ENCODE measurements at regions of chr2 and their contacts with region 1.

Region 1: DNA sequence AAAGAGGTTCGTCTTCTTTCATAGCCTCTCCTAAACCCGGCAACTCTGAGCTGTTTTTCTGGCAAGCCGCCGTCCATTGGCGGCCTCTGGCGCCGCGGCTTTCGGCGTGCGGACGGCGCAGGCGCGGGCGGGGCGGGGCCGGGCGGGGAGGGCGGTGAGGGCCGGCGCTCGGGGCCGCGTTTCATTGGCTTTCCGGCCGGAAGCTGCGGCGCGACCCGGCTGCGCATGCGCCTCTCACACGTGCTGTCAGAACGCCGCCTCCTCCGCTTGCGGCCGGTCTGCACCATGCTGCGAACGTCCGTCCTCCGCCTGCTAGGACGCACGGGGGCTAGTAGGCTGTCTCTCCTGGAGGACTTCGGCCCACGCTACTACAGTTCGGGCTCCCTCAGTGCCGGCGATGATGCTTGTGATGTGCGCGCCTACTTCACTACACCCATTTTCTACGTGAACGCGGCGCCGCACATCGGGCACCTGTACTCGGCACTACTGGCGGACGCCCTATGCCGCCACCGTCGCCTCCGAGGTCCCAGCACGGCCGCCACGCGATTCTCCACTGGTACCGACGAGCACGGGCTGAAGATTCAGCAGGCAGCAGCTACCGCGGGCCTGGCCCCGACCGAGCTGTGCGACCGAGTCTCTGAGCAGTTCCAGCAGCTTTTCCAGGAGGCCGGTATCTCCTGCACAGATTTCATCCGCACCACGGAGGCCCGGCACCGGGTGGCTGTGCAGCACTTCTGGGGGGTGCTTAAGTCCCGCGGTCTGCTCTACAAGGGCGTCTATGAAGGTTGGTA is at the start of gene MARS2:
- DNase-seq: peak; percentile 86 to 97 (median 93)
- ATAC-seq: peak; percentile 83
- H3K4me3 ChIP-seq: peak within 1 kb of the TSS; percentile 79 to 99
- H3K4me3 Mint-ChIP-seq: peak within 1 kb of the TSS; percentile 87
- H3K27ac ChIP-seq: peak within 1 kb of the TSS; percentile 82 to 88
- H3K27ac Mint-ChIP-seq: peak within 1 kb of the TSS; percentile 94
- H3K4me1 ChIP-seq: peaks cover 42% of the 10 kb centered on the region
- H3K4me1 Mint-ChIP-seq: peaks cover 40% of the 10 kb centered on the region
- H3K27me3 ChIP-seq: no peaks in the 10 kb centered on the region
- H3K27me3 Mint-ChIP-seq: peaks cover 4% of the 10 kb centered on the region
- CTCF ChIP-seq: no peak
- total RNA-seq, gene MARS2: 8.4 to 9.2 TPM

Region 2: DNA sequence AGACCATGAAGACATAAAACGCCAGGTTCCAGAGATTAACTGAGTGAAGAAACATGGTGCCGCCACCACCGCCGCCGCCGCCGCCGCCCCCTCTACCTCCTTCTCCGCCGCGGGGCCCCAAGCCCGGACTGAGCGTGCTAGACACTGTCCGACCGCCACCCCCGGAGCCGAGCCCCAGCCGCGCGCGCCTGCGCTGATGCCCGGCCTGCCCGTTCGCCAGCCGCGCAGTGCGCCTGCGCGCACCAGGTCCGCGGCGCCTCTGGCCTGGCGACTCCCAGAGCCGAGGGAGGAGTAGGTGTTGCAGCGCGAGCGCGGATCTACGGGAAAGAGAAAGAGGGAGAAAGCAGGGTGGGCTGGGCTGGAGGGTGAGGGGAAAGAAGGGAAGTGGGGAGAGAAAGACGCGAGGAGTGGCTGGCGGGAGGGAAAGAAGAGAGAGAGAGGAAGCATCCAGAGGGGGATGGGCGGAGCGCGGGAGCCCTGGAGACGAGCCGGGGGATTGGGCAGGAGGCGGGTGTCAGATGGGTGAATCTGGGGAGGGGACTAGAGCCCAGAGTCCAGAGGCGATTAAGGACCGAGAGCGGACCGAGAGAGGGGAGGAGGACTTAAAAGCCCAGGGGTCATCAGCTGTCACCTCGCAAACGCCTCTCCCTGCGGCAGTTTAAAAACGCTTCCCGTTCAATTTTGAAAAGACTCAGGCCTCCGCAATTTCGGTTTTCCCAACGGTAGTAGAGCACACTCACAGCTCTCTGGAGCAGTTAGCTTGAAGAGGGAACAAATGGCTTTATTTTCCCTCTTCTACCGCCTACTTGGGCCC is 778.5 kb before region 1 on chr2 and contains the start of gene PGAP1:
- CTCF ChIA-PET with region 1: no interaction called
- POLR2A ChIA-PET with region 1: no interaction called
- intact Hi-C with region 1: loop called (anchors 2 to 10 kb)
- DNase-seq: peak; percentile 65 to 91 (median 81)
- ATAC-seq: peak; percentile 74
- H3K4me3 ChIP-seq: peak within 1 kb of the TSS; percentile 88 to 96
- H3K4me3 Mint-ChIP-seq: peak within 1 kb of the TSS; percentile 97
- H3K27ac ChIP-seq: peak within 1 kb of the TSS; percentile 66 to 69
- H3K27ac Mint-ChIP-seq: peak within 1 kb of the TSS; percentile 90
- H3K4me1 ChIP-seq: peaks cover 23% of the 10 kb centered on the region
- H3K4me1 Mint-ChIP-seq: peaks cover 33% of the 10 kb centered on the region
- H3K27me3 ChIP-seq: no peaks in the 10 kb centered on the region
- H3K27me3 Mint-ChIP-seq: no peaks in the 10 kb centered on the region
- CTCF ChIP-seq: no peak
- total RNA-seq, gene PGAP1: 11.6 to 12.3 TPM

Region 3: DNA sequence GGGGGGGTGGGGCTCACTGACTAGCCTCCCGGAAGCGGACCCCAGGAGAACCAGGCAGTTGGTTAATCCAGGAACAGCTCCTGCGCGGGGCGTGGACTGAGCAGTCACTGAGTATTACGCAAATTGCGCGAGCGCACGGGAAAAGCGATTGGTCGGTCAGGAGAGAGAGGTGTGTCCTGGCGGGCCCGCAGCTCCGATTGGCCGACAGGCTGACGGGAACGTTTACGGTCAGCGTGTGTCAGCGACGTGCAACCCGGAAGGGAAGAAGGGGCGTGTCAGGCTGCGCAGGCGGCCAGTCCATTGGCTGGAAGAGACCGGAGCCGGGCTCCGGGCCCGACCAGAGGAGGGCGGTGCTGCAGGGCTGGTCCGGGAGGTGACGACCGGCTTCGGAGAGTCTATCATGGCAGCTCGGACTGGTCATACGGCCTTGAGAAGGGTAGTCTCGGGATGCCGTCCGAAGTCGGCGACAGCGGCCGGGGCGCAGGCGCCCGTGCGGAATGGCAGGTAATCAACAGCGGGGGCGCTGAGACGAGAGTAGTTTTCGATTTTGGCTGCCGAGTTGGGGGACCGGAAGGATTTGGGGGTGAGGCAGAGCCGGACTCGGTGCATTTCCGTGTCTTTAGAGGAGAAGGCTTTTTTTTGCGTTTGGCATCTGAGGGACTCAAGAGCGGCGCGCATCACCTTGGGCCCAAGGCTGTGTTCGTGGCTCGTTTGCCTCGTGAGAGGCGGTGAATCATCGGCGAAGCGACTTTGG is 252.0 kb before region 1 on chr2 and contains the start of gene COQ10B:
- CTCF ChIA-PET with region 1: no interaction called
- POLR2A ChIA-PET with region 1: no interaction called
- intact Hi-C with region 1: loop called (anchors 1 to 5 kb)
- DNase-seq: peak; percentile 95 to 100 (median 97)
- ATAC-seq: peak; percentile 87
- H3K4me3 ChIP-seq: peak within 1 kb of the TSS; percentile 62 to 74
- H3K4me3 Mint-ChIP-seq: peak within 1 kb of the TSS; percentile 99
- H3K27ac ChIP-seq: peak within 1 kb of the TSS; percentile 93 to 95
- H3K27ac Mint-ChIP-seq: peak within 1 kb of the TSS; percentile 100
- H3K4me1 ChIP-seq: peaks cover 28% of the 10 kb centered on the region
- H3K4me1 Mint-ChIP-seq: peaks cover 48% of the 10 kb centered on the region
- H3K27me3 ChIP-seq: no peaks in the 10 kb centered on the region
- H3K27me3 Mint-ChIP-seq: no peaks in the 10 kb centered on the region
- CTCF ChIP-seq: no peak
- total RNA-seq, gene COQ10B: 66.9 to 67.6 TPM

Region 4: DNA sequence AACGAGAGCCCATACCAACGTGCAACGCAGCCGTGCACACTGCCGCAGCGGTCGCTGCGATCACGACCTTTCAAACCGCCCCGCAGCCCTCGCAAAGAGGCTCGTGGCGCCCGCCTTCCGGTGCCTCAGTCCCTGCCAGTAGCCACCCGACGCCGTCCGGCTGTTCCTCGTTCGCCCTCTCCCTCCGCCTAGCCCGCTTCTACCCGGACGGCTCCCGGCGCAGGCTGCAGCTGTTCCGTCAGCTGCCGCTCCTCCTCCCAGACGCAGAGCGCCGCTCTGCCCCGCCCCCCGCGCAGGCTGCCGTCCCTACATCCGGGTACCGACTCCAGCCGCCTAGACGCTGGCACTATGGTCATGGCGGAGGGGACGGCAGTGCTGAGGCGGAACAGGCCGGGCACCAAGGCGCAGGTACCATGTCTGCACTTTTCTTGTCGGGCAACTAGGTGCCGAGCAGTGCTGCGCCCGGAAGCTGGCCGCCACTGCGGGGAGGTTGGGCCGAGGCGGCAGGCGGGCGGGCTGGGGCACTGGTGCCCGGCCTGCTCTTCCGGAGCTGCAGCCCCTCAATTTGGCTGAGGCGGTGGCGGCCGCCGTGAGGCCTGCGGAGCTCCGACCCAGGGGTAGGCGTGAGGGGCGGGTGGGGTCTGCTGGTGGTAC is 189.4 kb before region 1 on chr2 and contains the start of gene MOB4:
- CTCF ChIA-PET with region 1: no interaction called
- POLR2A ChIA-PET with region 1: interaction called, 11 read pairs
- intact Hi-C with region 1: loop called (anchors 5 kb)
- DNase-seq: peak; percentile 90 to 97 (median 93)
- ATAC-seq: peak; percentile 90
- H3K4me3 ChIP-seq: peak within 1 kb of the TSS; percentile 73 to 94
- H3K4me3 Mint-ChIP-seq: peak within 1 kb of the TSS; percentile 92
- H3K27ac ChIP-seq: peak within 1 kb of the TSS; percentile 88 to 99
- H3K27ac Mint-ChIP-seq: peak within 1 kb of the TSS; percentile 93
- H3K4me1 ChIP-seq: peaks cover 22% of the 10 kb centered on the region
- H3K4me1 Mint-ChIP-seq: peaks cover 44% of the 10 kb centered on the region
- H3K27me3 ChIP-seq: no peaks in the 10 kb centered on the region
- H3K27me3 Mint-ChIP-seq: no peaks in the 10 kb centered on the region
- CTCF ChIP-seq: no peak
- total RNA-seq, gene MOB4: 32.1 to 36.5 TPM

Region 5: DNA sequence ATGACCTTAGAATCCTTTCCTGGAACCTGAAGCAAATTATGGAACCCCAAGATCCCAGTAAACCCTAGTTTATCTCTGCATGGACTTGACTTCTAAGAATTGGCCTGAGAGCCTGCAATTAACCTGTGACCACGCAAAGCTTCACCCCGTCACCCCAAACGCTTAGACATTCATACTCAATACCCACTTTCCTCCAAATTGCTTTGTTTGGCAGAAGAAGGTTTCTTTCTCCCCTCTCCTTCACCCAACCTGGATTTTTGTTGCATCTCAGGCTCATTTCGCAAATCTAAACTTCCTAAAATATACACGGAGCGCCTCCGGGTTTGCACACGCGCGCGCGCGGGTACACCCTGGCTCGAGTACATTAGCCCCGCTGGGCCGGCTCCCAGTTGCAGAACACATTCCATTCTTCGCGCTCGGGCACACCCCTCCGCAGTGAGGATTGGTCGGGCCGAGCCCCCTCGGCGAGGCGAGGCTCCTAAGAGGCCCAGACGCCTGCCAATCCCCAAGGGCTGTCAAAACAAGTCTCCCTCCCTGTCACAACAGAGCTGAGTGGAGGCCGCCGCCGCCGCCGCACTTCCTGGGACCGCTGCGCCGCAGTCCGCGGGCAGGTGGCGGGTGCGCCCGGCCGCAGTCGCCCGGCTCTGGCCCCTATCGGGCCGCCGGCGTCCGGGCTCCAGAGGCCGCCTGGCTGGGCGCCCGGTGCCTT is 98.9 kb after region 1 on chr2 and contains the start of gene PLCL1:
- CTCF ChIA-PET with region 1: no interaction called
- POLR2A ChIA-PET with region 1: interaction called, 10 read pairs
- intact Hi-C with region 1: loop called in 1 of 2 experiments (anchors 1 kb)
- DNase-seq: peak; percentile 77 to 94 (median 88)
- ATAC-seq: peak; percentile 98
- H3K4me3 ChIP-seq: peak within 1 kb of the TSS; percentile 67 to 70
- H3K4me3 Mint-ChIP-seq: peak within 1 kb of the TSS; percentile 92
- H3K27ac ChIP-seq: peak within 1 kb of the TSS in 1 of 2 experiments; percentile 53
- H3K27ac Mint-ChIP-seq: peak within 1 kb of the TSS; percentile 89
- H3K4me1 ChIP-seq: peaks cover 44% of the 10 kb centered on the region
- H3K4me1 Mint-ChIP-seq: peaks cover 44% of the 10 kb centered on the region
- H3K27me3 ChIP-seq: no peaks in the 10 kb centered on the region
- H3K27me3 Mint-ChIP-seq: no peaks in the 10 kb centered on the region
- CTCF ChIP-seq: no peak
- total RNA-seq, gene PLCL1: 8.2 to 8.3 TPM

Region 6: DNA sequence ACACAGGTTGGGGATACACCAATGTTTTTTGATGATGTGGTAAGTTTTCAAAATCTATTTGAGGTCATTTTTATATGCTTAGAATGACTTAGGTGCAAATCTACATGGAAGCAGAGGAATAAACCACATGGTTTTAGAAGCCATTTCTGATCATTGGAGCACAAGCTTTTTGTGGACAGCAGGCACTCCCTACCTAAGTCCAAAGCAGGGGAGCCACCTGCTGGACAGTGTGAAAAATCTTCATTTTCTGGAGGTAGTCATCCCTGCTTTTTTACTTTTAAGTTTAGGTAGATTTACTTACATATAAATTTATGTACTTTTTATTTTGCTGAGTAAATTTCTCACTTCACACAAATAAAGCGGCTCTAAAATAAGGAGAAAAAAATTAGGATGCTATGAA is 422.3 kb after region 1 on chr2:
- CTCF ChIA-PET with region 1: interaction called, 3 read pairs
- POLR2A ChIA-PET with region 1: no interaction called
- intact Hi-C with region 1: loop called (anchors 2 kb)
- DNase-seq: peak; percentile 2 to 69 (median 32)
- ATAC-seq: peak; percentile 58
- H3K4me3 ChIP-seq: no peak overlapping the region
- H3K4me3 Mint-ChIP-seq: no peak overlapping the region
- H3K27ac ChIP-seq: no peak overlapping the region
- H3K27ac Mint-ChIP-seq: no peak overlapping the region
- H3K4me1 ChIP-seq: no peaks in the 10 kb centered on the region
- H3K4me1 Mint-ChIP-seq: no peaks in the 10 kb centered on the region
- H3K27me3 ChIP-seq: no peaks in the 10 kb centered on the region
- H3K27me3 Mint-ChIP-seq: no peaks in the 10 kb centered on the region
- CTCF ChIP-seq: peak; percentile 48